Left cardiac atrium (tissue), 4 donors: ENCODE measurements at regions of chr2 and their contacts with region 1.

Region 1: DNA sequence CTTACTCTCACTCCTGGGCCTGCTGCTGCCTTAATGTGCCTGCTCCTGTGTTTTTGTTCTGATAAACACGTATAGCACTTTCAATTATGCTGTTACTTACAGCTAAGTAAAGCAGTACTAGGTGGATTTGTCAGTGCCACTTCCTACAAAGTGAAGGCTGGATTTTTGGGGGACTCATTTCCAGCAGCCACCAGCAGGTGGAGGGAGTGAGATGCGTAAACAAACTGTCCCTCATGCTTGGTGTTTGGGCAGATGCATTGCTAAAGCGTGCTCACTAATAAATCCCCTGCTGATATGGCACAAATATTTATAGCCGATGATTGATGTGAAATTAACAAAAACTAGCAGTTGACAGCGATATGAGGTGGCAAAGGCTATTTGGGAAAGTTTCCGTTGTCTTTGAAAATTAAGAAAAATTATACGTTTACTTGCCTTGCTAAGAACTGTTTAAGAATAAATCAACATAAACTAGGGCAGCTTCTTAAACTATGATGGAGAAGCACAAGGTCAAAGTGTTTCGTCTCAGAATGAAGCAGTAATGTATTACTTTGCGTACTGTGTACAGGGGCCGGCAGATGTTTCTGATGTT is 101.7 kb downstream of the AGAP1 start:
- DNase-seq: peak; percentile 68
- ATAC-seq: peak; percentile 56 to 70

Region 2: GRCh38 chr2:235135990-235136561 is 459.4 kb before region 1 on chr2:
- intact Hi-C with region 1: loop called (anchors 1 to 2 kb)
- DNase-seq: peak; percentile 90
- ATAC-seq: peak; percentile 94 to 96

Region 3: DNA sequence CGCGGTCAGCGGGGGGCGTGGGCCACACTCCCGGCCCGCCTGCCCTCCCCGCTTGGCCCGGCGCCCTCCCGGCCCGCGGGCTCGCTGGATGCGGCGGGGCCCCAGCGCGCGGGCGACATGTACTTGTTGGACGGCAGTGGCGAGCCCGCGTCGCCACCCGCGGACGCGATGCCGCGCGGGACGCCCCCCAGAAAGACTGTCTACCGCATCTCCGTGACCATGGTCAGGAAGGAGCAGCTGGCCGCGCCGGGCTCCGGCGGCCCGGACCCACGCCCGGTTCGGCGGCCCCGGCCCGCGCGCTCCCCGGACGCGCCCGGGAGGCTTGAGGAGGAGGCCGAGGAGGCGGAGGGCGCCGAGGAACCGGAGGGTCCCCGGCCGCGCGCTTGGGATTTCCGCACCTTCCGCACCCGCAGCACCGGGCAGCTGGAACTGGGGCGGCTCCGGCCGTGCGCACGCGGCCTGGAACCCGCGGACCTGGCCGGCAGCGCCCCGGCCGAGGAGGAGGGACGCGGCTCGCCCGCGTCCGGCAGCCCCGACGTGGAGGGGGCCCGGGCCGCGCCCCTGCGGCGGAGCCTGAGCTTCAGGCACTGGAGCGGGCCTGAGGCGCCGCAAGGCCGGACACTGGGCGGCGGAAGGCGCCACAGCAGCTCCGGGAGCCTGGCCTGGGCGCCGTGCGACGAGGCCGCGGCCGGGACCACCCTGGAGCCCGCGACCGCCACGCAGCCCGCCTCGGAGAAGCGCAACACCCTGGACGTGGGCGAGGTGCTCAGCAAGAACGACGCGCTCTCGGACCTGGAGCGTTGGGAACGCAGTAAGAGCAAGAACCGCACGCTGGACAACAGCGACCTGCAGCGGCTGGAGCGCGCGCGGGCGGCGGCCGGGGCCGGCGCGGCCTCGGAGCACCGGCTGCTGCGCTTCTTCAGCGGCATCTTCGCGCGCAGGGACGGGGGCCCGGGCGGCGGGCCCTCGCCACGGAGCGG is 74.8 kb after region 1 on chr2:
- intact Hi-C with region 1: loop called in 1 of 2 experiments (anchors 2 kb)
- DNase-seq: peak; percentile 74
- ATAC-seq: peak; percentile 69 to 78